Spleen (tissue), 13 donors: ENCODE measurements at regions of chr11 and their contacts with region 1.

Region 1: GRCh38 chr11:72793425-72794367 is at the start of gene STARD10:
- DNase-seq: peak; percentile 99
- H3K4me3 ChIP-seq: peak within 1 kb of the TSS; percentile 52 to 78 (median 60)
- H3K27ac ChIP-seq: peak within 1 kb of the TSS; percentile 87 to 97 (median 96)
- H3K4me1 ChIP-seq: peaks cover 7 to 57% (median 24%) of the 10 kb centered on the region in 6 donors
- H3K27me3 ChIP-seq: no peaks in the 10 kb centered on the region
- CTCF ChIP-seq: peak; percentile 96 to 100 (median 99)
- POLR2A ChIP-seq: peak in 1 of 3 donors; percentile 48
- total RNA-seq, gene STARD10: 19.7 to 35.1 (median 27.9) TPM

Region 2: GRCh38 chr11:72722050-72722748 is 71.5 kb before region 1 on chr11:
- intact Hi-C with region 1: loop called (anchors 5 kb)
- DNase-seq: peak; percentile 96
- H3K4me3 ChIP-seq: peak overlapping the region; percentile 52 to 81 (median 60)
- H3K27ac ChIP-seq: peak overlapping the region; percentile 85 to 97 (median 92)
- H3K4me1 ChIP-seq: peaks cover 52 to 100% (median 86%) of the 10 kb centered on the region in 6 donors
- H3K27me3 ChIP-seq: no peaks in the 10 kb centered on the region
- CTCF ChIP-seq: peak in 2 of 11 experiments; percentile 1 to 37
- POLR2A ChIP-seq: peak in 1 of 3 donors; percentile 16